ENCODE measurements at regions of chr2 and their contacts with region 1.

Region 1: DNA sequence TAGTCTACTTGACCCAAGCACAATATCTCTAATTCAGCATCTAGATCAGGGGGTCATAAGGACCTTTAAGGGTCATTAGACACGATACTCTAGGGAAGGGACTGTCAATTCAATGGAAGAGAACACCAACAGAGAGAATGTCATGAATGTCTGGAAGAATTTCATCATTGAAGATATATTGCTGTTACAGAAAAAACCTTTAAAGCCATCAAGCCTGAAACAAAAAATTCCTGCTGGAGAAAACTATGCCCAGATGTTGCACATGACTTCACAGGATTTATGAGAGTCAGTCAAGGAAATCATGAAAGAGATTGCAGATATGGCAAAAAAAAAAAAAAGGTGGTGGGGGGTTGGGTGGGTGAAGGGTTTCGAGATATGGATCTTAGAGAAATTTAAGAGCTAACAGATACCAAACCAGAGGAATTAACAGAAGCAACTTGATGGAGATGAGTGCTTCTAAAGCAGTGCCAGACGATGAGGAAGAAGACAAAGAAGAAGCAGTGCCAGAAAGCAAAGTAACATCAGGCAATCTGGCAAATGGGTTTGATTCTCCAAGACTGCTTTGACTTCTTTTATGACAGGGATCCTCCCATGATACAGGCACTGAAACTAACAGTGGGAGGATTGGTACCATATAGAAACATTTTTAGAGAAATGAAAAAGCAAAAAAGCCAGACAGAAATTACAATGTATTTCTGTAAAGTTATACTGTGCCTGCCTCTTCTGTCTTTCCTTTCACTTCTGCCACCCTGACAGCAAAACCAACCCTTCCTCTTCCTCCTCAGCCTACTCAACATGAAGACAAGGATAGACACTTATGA is 28.6 kb downstream of the MAP4K3 start:
- DNase-seq: no peak
- H3K4me3 Mint-ChIP-seq: no peak overlapping the region
- H3K27ac Mint-ChIP-seq: no peak overlapping the region
- H3K4me1 Mint-ChIP-seq: peaks cover 78% of the 10 kb centered on the region
- H3K27me3 Mint-ChIP-seq: no peaks in the 10 kb centered on the region

Region 2: DNA sequence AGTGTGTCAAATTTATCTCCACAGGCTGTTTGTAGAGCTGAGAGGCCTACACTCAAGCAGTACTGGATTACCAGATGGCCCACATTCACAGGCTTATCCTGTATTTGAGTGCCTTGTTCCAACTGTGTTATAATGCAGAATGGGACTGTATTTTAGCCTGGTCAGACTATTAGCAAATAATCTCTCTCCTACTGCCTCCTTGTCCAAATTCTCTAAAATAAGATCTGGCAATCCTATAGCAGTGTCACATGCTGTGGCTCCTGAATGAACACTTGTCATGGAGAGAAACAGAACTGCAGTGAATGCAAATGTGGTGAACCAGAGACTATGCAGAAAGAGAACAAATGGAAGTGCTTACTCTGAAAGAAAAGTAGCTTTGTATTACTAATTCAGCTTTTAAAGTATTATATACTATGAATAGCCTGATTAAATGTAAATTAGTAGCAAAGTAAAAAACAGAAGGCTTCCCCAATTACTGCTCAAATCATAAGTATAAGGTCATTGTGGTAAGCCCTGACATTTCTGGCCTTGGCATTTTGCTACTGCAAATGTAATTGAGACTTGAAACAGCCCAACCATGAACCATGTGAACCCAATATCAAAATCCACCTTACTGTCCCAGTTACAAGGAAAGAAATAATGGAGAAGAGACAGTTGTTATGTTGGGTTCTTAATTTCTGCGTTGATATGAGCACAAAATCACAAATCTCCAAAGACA is 51.4 kb before region 1 on chr2:
- CTCF ChIA-PET with region 1: no interaction called
- intact Hi-C with region 1: no loop called
- DNase-seq: no peak
- H3K4me3 Mint-ChIP-seq: no peak overlapping the region
- H3K27ac Mint-ChIP-seq: no peak overlapping the region
- H3K4me1 Mint-ChIP-seq: no peaks in the 10 kb centered on the region
- H3K27me3 Mint-ChIP-seq: no peaks in the 10 kb centered on the region

Region 3: GRCh38 chr2:39431592-39432316 is 23.2 kb after region 1 on chr2:
- CTCF ChIA-PET with region 1: no interaction called
- intact Hi-C with region 1: loop called (anchors 1 kb)
- DNase-seq: no peak
- H3K4me3 Mint-ChIP-seq: no peak overlapping the region
- H3K27ac Mint-ChIP-seq: no peak overlapping the region
- H3K4me1 Mint-ChIP-seq: peaks cover 69% of the 10 kb centered on the region
- H3K27me3 Mint-ChIP-seq: no peaks in the 10 kb centered on the region